A549 (cell line): ENCODE measurements at regions of chr4 and their contacts with region 1.

Region 1: DNA sequence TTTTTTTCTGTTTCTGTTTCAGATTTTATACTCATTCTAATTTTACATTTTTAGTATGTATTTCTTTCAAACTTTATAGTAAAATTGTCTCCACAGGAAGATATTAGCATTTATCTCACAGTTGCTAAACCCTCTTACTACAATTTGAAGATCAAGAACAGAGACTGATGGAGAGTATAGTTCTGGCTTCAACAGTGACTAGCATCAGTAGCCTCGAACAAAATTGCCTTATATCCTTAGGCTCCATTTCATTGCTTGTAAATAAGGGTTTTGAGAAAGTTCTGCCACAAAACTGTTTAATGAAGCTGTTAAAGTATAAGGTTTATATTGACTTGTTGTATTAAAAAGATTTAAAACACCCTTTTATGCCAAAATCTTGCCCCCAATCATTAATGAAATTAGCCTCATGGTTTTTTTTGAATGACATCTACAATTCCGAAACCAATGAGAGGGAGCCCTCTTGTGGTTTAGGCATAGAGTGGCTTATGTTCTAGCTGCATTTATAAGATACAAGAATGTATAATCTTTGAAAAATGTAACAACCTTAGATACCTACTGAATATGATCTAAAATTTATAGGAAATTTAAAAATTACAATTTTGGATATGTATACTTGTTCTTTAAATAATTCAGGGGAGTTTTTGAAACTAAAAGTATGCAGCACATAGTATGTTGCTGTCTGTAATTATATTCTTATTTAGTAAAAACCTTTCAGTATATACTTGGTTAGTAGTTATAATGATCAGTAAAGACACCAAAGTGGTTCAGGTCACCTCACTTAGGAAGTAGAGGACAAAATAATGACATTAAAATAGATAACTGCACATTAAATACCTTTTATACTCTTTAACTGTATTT is 109.8 kb upstream of the HPGD start:
- DNase-seq: peak; percentile 5 to 62
- ATAC-seq: peak in 1 of 2 experiments; percentile 82; a peak in 3 of 6 replicates
- H3K4me3 ChIP-seq: no peak overlapping the region
- H3K27ac ChIP-seq: peak overlapping the region; percentile 47 to 50
- H3K4me1 ChIP-seq: peaks cover 21% of the 10 kb centered on the region
- CTCF ChIP-seq: peak; percentile 78
- EP300 ChIP-seq: no peak
- POLR2A ChIP-seq: no peak
- RAD21 ChIP-seq: peak; percentile 88 to 95

Region 2: DNA sequence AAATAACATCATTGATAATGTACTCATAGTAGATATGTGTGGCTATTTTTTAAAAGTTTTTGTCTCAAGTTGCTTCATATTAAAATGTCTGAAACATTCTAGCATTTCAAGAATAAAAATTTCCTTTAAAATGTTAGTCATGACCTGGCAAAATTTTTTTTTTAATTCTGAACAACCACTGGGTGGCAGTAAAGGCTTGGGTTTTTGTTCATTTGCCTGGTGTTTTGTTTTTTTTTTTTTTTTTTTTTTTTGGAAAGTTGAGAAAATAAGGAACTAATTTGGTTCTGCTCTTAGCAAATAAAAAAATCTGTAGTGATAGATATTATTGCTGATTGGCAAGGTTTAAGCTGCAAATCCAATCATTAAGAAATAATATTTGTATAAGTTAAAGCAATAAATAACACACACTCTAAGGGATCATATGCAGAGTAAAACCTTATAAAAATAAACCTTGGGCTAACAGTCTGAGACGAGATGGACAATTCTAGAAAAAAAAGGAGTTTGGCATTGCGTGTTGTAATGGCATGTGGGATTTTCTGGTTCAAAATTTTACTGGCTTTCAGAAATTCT is 267.0 kb before region 1 on chr4:
- CTCF ChIA-PET with region 1: interaction called, 15 read pairs
- POLR2A ChIA-PET with region 1: no interaction called
- DNase-seq: peak in 1 of 2 experiments; percentile 53
- ATAC-seq: no peak
- H3K4me3 ChIP-seq: no peak overlapping the region
- H3K27ac ChIP-seq: peak overlapping the region; percentile 74 to 81
- H3K4me1 ChIP-seq: peaks cover 13% of the 10 kb centered on the region
- CTCF ChIP-seq: peak; percentile 64
- EP300 ChIP-seq: no peak
- POLR2A ChIP-seq: no peak
- RAD21 ChIP-seq: peak; percentile 78 to 88